ENCODE measurements at regions of chr20 and their contacts with region 1.

Region 1: DNA sequence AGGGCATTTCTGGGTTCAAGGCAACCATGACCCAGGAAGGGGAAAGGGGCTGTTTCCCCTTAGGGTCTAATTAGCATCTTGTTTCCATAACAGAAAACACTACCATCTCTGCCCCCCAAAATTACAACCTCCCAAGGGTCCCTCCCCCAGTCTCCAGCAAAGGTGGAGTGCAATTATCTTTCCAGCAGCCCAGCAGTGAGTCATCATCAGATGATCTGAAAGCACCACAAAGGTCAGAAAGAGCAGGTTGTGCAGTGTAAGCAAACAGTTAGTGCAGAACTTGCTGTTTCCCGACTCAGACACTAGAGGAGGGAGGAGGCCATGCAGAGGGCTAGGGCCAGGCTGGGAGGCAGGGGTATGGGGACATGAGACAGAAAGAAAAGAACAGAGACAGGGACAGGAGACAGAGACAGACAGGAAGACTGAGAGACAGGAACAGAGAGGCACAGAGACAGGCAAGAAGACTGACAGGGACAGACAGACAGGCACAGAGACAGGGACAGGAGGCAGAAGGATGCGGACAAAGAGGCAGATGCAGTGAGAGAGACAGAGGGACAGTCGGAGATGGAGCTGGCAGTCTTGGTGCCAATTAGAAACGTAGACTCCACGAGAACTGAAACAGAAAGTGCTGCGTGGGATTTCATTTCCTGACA is 62.5 kb downstream of the PYGB start:
- DNase-seq: peak; percentile 69 to 72
- H3K4me3 ChIP-seq: peak overlapping the region in 1 of 2 donors; percentile 28
- H3K27ac ChIP-seq: peak overlapping the region; percentile 42 to 50
- H3K4me1 ChIP-seq: peaks cover 0 to 30% (median 19%) of the 10 kb centered on the region in 4 donors
- H3K27me3 ChIP-seq: no peaks in the 10 kb centered on the region
- CTCF ChIP-seq: peak; percentile 49

Region 2: GRCh38 chr20:24994470-24995368 is 315.7 kb before region 1 on chr20:
- intact Hi-C with region 1: no loop called
- DNase-seq: peak; percentile 80 to 85
- H3K4me3 ChIP-seq: peak overlapping the region in 1 of 2 donors; percentile 8
- H3K27ac ChIP-seq: no peak overlapping the region
- H3K4me1 ChIP-seq: peaks cover 0 to 33% (median 23%) of the 10 kb centered on the region in 4 donors
- H3K27me3 ChIP-seq: no peaks in the 10 kb centered on the region
- CTCF ChIP-seq: peak; percentile 95 to 98

Region 3: DNA sequence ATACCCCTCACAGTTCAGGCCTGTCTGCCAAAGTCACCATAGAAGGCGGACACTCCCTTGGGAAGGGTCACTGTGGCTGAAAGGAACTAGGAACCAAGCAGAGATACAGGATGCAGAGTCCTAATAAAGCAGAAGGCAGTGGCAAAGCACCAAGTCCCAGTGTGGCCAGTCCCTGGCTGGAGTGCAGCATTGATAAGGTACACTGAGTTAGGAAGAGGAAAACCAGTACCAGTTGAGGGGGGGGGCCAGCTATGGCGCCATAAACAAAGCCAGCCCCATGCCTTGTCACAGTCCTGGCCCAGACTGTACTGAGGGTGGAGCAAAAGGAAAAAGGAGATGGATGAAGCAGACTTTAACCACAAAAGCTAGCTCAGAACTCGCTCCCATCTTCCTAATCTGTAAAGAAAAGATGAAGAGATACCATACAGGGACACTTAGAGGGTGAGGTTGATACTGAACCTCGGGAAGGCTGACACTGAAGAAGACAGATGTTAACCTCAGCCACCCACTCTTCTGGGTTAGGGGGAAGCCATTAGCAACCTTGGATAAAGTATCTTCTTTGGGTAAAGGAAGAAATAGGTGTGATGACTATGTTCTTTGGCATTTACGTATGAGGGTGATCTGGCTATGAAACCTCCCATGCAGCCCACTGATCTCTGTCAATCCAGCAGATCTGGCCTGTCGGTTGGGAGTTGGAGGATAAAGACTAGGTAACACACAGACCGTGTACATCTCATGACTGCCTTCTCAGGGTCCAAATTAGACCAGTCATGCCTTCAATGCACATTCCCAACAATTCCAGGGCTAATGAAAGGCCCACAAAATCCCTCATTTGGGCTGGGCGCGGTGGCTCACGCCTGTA is 72.5 kb after region 1 on chr20:
- intact Hi-C with region 1: no loop called
- DNase-seq: no peak
- H3K4me3 ChIP-seq: no peak overlapping the region
- H3K27ac ChIP-seq: no peak overlapping the region
- H3K4me1 ChIP-seq: peaks cover 0 to 5% (median 0%) of the 10 kb centered on the region in 4 donors
- H3K27me3 ChIP-seq: no peaks in the 10 kb centered on the region
- CTCF ChIP-seq: no peak

Region 4: GRCh38 chr20:25399037-25399430 is 88.6 kb after region 1 on chr20:
- intact Hi-C with region 1: loop called (anchors 5 kb)
- DNase-seq: peak in 1 of 2 donors; percentile 38
- H3K4me3 ChIP-seq: no peak overlapping the region
- H3K27ac ChIP-seq: no peak overlapping the region
- H3K4me1 ChIP-seq: peaks cover 0 to 4% (median 0%) of the 10 kb centered on the region in 4 donors
- H3K27me3 ChIP-seq: peaks cover 0 to 3% of the 10 kb centered on the region in 2 donors
- CTCF ChIP-seq: peak; percentile 58 to 60

Region 5: DNA sequence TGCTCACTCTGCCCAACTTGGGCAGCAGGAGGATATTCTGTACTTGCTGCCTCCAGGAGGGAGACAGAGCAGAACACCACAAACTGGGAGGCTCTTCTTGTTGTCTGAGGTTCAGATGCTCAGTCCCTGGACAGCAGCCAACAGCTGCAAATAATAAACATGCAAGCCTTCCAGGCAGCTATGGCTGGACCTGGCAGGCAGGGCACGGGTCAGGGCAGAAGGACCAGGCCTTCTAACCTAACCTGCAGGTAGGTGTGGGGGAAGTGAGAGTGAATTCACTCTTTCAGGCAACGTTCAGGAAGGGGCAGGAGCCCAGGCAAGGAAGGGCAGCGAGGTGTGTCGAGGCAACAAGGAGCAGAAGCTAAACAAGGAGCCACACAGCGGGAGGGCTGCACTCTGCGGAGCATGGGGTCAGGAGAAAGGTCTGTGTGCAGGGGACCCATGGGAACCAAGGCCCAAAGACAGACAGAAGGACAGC is 243.5 kb after region 1 on chr20:
- intact Hi-C with region 1: no loop called
- DNase-seq: no peak
- H3K4me3 ChIP-seq: no peak overlapping the region
- H3K27ac ChIP-seq: no peak overlapping the region
- H3K4me1 ChIP-seq: peaks cover 0 to 17% (median 9%) of the 10 kb centered on the region in 4 donors
- H3K27me3 ChIP-seq: no peaks in the 10 kb centered on the region
- CTCF ChIP-seq: no peak